Heart left ventricle (tissue), 16 donors: ENCODE measurements at regions of chr3 and their contacts with region 1.

Region 1: DNA sequence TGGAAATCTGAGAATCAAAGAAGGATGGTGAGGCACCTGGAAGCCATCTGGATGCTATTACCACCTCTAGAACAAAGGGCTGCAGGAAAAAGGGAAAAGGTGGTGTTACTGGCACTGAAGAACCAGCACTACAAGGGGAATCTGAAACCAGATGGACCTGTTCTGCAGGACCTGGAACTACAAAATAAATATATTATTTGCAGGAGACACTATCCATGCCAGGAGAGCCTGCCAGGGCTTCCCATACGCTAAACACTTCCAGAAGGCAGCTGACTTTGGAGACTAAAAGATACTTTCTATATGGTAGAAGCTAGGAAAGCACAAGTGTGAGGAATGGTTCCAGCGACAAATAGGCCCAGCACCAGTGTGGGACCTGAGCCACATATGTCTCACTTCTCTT is 83.4 kb upstream of the POU1F1 start:
- DNase-seq: no peak
- ATAC-seq: no peak
- H3K4me3 ChIP-seq: no peak overlapping the region
- H3K27ac ChIP-seq: no peak overlapping the region
- H3K4me1 ChIP-seq: no peaks in the 10 kb centered on the region
- H3K27me3 ChIP-seq: no peaks in the 10 kb centered on the region
- CTCF ChIP-seq: no peak
- POLR2A ChIP-seq: no peak

Region 2: DNA sequence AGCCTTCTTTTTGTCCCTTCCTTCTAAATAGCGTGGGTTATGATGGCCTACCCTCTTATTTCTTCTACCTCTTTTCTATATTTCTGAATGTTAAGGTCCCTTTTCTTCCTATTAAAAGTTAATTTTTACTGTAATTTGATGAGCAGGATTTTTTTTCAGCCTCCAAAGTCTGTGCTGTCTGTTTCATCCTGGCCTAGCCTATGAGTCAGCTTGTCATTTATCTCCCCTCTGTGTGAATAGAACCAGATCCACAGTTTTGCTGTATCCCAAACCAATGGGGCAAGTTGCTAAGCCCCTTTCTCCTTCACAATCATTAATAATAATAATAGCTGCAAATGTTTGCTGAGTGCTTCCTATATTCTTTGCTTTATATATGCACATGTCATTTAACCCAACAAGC is 771.9 kb after region 1 on chr3:
- intact Hi-C with region 1: loop called in 1 of 10 experiments (anchors 5 kb)
- DNase-seq: no peak
- ATAC-seq: no peak
- H3K4me3 ChIP-seq: no peak overlapping the region
- H3K27ac ChIP-seq: no peak overlapping the region
- H3K4me1 ChIP-seq: peaks cover 0 to 13% (median 0%) of the 10 kb centered on the region in 12 donors
- H3K27me3 ChIP-seq: no peaks in the 10 kb centered on the region
- CTCF ChIP-seq: no peak
- POLR2A ChIP-seq: no peak